Activated CD4-positive, alpha-beta memory T cell treated with anti-CD3 and anti-CD28 coated beads for 36 hours (primary cell): ENCODE measurements at regions of chr15 and their contacts with region 1.

Region 1: GRCh38 chr15:85582131-85583079 is 202.0 kb downstream of the AKAP13 start:
- DNase-seq: peak; percentile 79
- H3K4me3 Mint-ChIP-seq: peak overlapping the region; percentile 86
- H3K27ac Mint-ChIP-seq: peak overlapping the region; percentile 93
- H3K4me1 Mint-ChIP-seq: peaks cover 79% of the 10 kb centered on the region
- H3K27me3 Mint-ChIP-seq: no peaks in the 10 kb centered on the region

Region 2: DNA sequence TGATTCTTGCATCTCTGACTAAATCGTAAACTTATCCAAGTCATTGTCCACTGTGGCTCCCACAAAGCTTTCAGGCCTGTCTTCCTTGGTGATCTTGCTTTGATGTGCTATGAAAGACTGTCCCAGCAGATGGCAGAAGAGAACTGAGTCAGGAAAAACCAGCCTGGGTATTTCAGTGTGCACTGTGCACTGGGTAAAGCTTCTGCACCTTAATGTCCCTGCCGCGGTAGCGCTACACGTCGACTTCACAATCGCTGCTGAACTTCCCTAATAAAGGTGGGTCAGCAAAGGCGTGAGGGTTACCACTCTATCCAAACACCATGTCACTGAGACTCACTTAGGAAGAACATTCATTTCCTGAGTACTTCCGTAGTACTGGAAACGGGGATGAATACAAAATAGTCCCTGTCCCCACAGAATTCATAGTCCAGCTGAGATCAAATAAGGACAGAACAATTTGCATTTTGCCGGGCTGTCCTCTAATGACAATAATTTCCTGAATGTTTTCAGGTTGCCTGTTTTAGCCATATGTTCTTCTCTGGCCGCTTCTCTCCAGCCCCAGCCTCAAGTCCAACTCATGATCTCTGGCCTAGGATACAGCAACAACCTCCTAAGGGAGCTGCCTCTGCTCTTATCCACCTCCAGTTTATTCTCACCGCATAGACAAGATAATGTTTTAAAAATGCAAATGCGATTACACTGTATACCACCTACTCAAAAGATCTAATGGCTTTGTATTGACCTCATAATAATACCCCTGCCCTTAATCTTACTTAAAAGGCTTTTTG is 285.6 kb before region 1 on chr15:
- CTCF ChIA-PET with region 1: interaction called, 11 read pairs
- POLR2A ChIA-PET with region 1: no interaction called
- intact Hi-C with region 1: loop called (anchors 5 kb)
- DNase-seq: peak; percentile 77
- H3K4me3 Mint-ChIP-seq: peak overlapping the region; percentile 52
- H3K27ac Mint-ChIP-seq: no peak overlapping the region
- H3K4me1 Mint-ChIP-seq: peaks cover 12% of the 10 kb centered on the region
- H3K27me3 Mint-ChIP-seq: no peaks in the 10 kb centered on the region

Region 3: GRCh38 chr15:85361323-85361722 is 221.1 kb before region 1 on chr15:
- CTCF ChIA-PET with region 1: no interaction called
- POLR2A ChIA-PET with region 1: no interaction called
- intact Hi-C with region 1: no loop called
- DNase-seq: no peak
- H3K4me3 Mint-ChIP-seq: no peak overlapping the region
- H3K27ac Mint-ChIP-seq: no peak overlapping the region
- H3K4me1 Mint-ChIP-seq: peaks cover 19% of the 10 kb centered on the region
- H3K27me3 Mint-ChIP-seq: no peaks in the 10 kb centered on the region

Region 4: GRCh38 chr15:85412956-85413854 is 169.2 kb before region 1 on chr15:
- CTCF ChIA-PET with region 1: interaction called, 3 read pairs
- POLR2A ChIA-PET with region 1: no interaction called
- intact Hi-C with region 1: loop called (anchors 1 kb)
- DNase-seq: peak; percentile 88
- H3K4me3 Mint-ChIP-seq: peak overlapping the region; percentile 50
- H3K27ac Mint-ChIP-seq: peak overlapping the region; percentile 76
- H3K4me1 Mint-ChIP-seq: peaks cover 78% of the 10 kb centered on the region
- H3K27me3 Mint-ChIP-seq: no peaks in the 10 kb centered on the region

Region 5: DNA sequence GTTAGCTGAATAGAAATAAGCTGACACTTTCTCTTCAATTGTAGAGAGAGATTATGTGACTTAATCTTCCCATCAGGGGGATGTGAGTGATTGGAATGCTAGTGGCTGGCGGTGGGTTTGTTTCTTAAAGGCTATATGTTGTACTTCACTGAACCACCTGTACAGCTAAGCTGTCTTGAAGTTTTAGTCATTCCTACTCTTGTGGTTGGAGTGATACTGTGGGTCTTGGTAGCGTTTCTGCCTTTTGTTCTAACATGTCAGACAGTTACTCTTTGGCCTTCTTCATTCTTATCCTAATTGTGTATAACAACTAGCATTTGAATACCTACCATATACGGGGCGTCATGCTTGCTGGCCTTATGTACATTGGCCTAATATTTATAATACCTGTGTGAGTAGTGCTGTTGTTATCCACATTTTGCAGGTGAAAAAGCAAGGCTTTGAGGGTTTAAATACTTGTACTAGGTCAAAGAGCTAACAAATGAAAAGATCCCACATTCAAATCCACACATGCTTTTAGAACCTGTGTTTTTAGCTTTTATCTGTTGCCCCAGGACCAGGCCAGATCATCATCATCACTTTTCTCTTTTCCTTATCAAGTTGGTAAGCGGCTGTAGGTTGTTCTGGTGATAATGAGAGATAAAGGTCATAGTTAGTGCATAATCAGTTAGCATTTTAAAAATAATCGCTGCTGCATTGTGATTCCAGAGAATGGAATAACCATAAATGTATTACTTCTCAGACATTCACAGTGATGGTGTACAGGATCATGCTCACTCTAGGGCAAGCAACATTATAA is 151.8 kb before region 1 on chr15:
- CTCF ChIA-PET with region 1: no interaction called
- POLR2A ChIA-PET with region 1: no interaction called
- intact Hi-C with region 1: no loop called
- DNase-seq: peak; percentile 61
- H3K4me3 Mint-ChIP-seq: no peak overlapping the region
- H3K27ac Mint-ChIP-seq: peak overlapping the region; percentile 18
- H3K4me1 Mint-ChIP-seq: peaks cover 57% of the 10 kb centered on the region
- H3K27me3 Mint-ChIP-seq: no peaks in the 10 kb centered on the region

Region 6: DNA sequence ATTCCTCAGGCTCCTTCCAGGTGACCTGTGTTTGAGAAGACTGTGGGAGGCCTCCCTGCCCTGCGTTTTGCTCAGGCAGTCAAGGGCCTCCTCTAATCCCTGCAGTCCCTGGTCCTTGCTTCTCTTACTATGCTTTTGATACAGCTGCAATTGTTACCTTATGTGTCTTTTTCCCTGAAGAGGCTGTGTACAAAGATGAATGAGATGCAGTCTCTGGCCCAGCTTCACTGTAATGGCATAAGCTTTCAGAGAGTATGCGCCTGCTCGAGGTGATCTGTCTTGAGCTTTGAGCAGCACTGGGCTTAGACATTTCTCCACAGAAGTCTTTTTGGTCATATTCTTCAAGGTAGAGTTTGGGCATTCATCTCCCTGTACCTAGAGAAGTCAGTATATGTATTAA is 72.4 kb before region 1 on chr15:
- CTCF ChIA-PET with region 1: no interaction called
- POLR2A ChIA-PET with region 1: no interaction called
- intact Hi-C with region 1: no loop called
- DNase-seq: no peak
- H3K4me3 Mint-ChIP-seq: no peak overlapping the region
- H3K27ac Mint-ChIP-seq: no peak overlapping the region
- H3K4me1 Mint-ChIP-seq: peaks cover 53% of the 10 kb centered on the region
- H3K27me3 Mint-ChIP-seq: no peaks in the 10 kb centered on the region

Region 7: DNA sequence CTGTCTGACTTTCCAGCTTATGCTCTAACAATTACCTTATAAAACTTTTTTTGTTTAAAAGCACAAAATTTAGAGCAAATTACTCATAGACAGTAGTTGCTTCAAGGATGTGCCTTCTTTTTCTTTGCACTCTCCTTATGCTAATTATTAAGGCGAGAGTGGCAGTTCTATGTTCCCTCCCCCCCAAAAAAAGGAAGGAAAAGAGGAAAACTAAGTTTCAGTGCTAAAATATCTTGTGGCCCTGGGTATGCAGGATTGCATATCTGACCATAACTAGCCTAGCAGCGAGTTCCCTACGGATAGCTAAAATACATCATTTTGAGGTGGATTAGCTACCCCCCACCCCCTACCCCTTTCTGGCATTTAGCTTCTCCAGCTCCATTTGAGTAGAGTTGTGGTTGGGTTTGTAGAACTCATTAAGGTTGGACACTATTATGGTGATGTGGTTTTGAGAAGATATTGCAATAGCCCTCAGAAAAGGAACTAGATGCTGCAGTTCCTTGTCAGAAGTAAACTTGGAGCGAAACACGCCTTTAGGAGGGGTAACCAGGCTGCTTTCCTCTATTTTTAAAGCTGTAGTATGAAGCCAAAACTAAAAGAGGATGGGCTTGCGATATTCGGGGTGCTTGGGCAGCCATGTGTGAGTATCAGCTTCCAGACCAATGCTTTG is 27.4 kb before region 1 on chr15:
- CTCF ChIA-PET with region 1: interaction called, 9 read pairs
- POLR2A ChIA-PET with region 1: interaction called, 16 read pairs
- intact Hi-C with region 1: loop called (anchors 2 kb)
- DNase-seq: no peak
- H3K4me3 Mint-ChIP-seq: no peak overlapping the region
- H3K27ac Mint-ChIP-seq: no peak overlapping the region
- H3K4me1 Mint-ChIP-seq: peaks cover 65% of the 10 kb centered on the region
- H3K27me3 Mint-ChIP-seq: no peaks in the 10 kb centered on the region

Region 8: DNA sequence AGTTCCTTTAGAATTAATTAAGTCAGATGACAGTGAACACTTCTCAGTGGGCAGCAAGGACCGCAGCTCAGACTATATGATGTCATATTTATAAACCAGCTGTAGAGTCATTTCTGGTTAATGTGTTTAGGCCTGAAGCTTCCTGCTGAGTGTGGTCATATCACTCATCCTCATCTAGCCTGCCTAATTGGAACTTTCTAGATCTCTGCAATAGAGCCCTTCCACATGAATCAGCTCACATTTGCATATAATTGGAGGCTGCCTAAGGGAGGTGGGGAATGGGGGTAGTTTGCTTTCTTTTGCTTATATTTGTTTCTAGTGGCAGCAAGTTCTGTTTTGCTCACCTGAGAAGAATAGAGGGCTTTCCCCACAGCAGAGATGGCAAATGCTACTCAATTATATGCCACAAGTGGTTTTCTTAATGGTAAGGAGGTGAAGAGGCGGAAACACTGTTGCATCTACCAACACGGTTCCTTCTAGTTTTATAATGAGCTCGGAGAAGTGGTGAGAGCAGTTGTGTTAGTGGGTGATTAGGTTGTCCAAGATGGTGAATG is 64.2 kb after region 1 on chr15:
- CTCF ChIA-PET with region 1: interaction called, 5 read pairs
- POLR2A ChIA-PET with region 1: interaction called, 16 read pairs
- intact Hi-C with region 1: loop called (anchors 1 kb)
- DNase-seq: peak; percentile 58
- H3K4me3 Mint-ChIP-seq: no peak overlapping the region
- H3K27ac Mint-ChIP-seq: peak overlapping the region; percentile 90
- H3K4me1 Mint-ChIP-seq: peaks cover 65% of the 10 kb centered on the region
- H3K27me3 Mint-ChIP-seq: no peaks in the 10 kb centered on the region

Region 9: GRCh38 chr15:85707519-85708338 is 125.3 kb after region 1 on chr15:
- CTCF ChIA-PET with region 1: interaction called, 6 read pairs
- POLR2A ChIA-PET with region 1: interaction called, 22 read pairs
- intact Hi-C with region 1: loop called (anchors 1 kb)
- DNase-seq: peak; percentile 58
- H3K4me3 Mint-ChIP-seq: peak overlapping the region; percentile 76
- H3K27ac Mint-ChIP-seq: peak overlapping the region; percentile 94
- H3K4me1 Mint-ChIP-seq: peaks cover 87% of the 10 kb centered on the region
- H3K27me3 Mint-ChIP-seq: no peaks in the 10 kb centered on the region